ENCODE measurements at regions of chr2 and their contacts with region 1.

Region 1: GRCh38 chr2:55239656-55240222 is 7.3 kb downstream of the RPS27A start:
- DNase-seq: no peak
- ATAC-seq: peak in 1 of 4 experiments; percentile 20
- H3K4me3 ChIP-seq: no peak overlapping the region
- H3K4me3 Mint-ChIP-seq: no peak overlapping the region
- H3K27ac ChIP-seq: no peak overlapping the region
- H3K27ac Mint-ChIP-seq: no peak overlapping the region
- H3K4me1 ChIP-seq: peaks cover 0 to under 1% of the 10 kb centered on the region in 2 experiments
- H3K4me1 Mint-ChIP-seq: peaks cover 6 to 23% (median 18%) of the 10 kb centered on the region in 3 donors
- H3K27me3 ChIP-seq: no peaks in the 10 kb centered on the region
- H3K27me3 Mint-ChIP-seq: no peaks in the 10 kb centered on the region

Region 2: DNA sequence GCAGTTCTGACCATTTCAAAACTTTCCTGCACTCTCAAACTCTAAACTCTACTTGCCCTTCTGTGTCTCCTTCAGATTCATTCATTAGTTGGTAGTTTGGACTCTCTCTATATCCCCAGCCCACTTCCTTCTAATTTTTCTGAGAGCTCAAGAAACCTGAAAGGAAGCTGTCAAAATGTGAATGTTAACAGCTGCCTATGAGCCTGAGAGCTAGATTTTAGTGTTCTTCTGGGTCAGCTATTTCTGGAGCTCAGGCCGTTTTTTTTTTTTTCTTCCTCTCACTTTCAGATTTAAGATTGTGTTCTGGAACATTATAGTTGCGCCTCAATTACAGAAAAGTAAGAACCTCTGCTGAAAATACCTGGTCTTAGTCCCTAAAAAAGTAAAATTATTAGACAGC is 262.6 kb before region 1 on chr2:
- CTCF ChIA-PET with region 1: no interaction called
- POLR2A ChIA-PET with region 1: interaction called in 1 of 2 experiments, 12 read pairs
- DNase-seq: no peak
- ATAC-seq: no peak
- H3K4me3 ChIP-seq: no peak overlapping the region
- H3K4me3 Mint-ChIP-seq: no peak overlapping the region
- H3K27ac ChIP-seq: no peak overlapping the region
- H3K27ac Mint-ChIP-seq: peak overlapping the region in 1 of 2 donors; percentile 15
- H3K4me1 ChIP-seq: no peaks in the 10 kb centered on the region
- H3K4me1 Mint-ChIP-seq: peaks cover 41 to 43% (median 41%) of the 10 kb centered on the region in 3 donors
- H3K27me3 ChIP-seq: no peaks in the 10 kb centered on the region
- H3K27me3 Mint-ChIP-seq: no peaks in the 10 kb centered on the region

Measured in T-cell (primary cell).